Ovary (tissue), 10 donors: ENCODE measurements at regions of chr12 and their contacts with region 1.

Region 1: GRCh38 chr12:96516472-96517430 is 27.4 kb downstream of the CFAP54 start:
- DNase-seq: peak; percentile 28 to 75 (median 64)
- H3K4me3 ChIP-seq: no peak overlapping the region
- H3K27ac ChIP-seq: no peak overlapping the region
- H3K4me1 ChIP-seq: no peaks in the 10 kb centered on the region
- H3K27me3 ChIP-seq: no peaks in the 10 kb centered on the region
- CTCF ChIP-seq: peak in 2 of 3 donors; percentile 33 to 59
- EP300 ChIP-seq: no peak
- POLR2A ChIP-seq: no peak

Region 2: DNA sequence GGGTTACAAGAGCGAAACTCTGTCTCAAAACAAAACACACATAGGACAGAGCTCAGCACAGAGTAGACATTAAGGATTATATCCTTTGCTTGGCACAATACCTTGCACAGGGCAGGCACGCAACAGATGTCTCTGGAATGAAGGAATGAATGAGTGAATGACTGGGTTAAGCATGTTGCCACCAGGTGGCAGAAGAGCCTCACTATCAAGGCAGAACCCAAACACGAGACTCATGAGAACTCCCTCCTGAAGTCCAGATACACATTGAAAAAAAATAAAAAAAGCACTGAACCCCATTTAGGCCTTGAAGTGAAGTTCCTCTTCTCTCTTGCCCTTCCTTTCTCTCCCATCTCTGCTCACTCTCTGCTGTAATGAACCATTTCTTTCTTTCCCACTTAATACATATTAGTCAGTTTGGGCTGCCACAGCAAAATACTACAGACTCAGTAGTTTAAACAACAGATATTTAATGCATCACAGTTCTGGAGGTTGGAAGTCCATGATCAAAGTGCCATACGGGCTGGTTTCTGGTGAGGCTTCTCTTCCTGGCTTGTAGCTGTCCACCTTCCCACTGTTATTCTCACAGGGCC is 454.8 kb before region 1 on chr12:
- intact Hi-C with region 1: loop called in 2 of 4 experiments (anchors 5 kb)
- DNase-seq: peak; percentile 41 to 74 (median 67)
- H3K4me3 ChIP-seq: no peak overlapping the region
- H3K27ac ChIP-seq: no peak overlapping the region
- H3K4me1 ChIP-seq: no peaks in the 10 kb centered on the region
- H3K27me3 ChIP-seq: no peaks in the 10 kb centered on the region
- CTCF ChIP-seq: peak; percentile 34 to 70 (median 60)
- EP300 ChIP-seq: no peak
- POLR2A ChIP-seq: no peak

Region 3: GRCh38 chr12:96194971-96195844 is 321.5 kb before region 1 on chr12:
- intact Hi-C with region 1: loop called in 2 of 4 experiments (anchors 10 kb)
- DNase-seq: peak; percentile 27 to 56 (median 47)
- H3K4me3 ChIP-seq: peak overlapping the region; percentile 91
- H3K27ac ChIP-seq: no peak overlapping the region
- H3K4me1 ChIP-seq: peaks cover 4% of the 10 kb centered on the region
- H3K27me3 ChIP-seq: no peaks in the 10 kb centered on the region
- CTCF ChIP-seq: no peak
- EP300 ChIP-seq: no peak
- POLR2A ChIP-seq: no peak

Region 4: GRCh38 chr12:96208801-96209549 is 307.8 kb before region 1 on chr12:
- intact Hi-C with region 1: loop called in 2 of 4 experiments (anchors 10 kb)
- DNase-seq: no peak
- H3K4me3 ChIP-seq: no peak overlapping the region
- H3K27ac ChIP-seq: no peak overlapping the region
- H3K4me1 ChIP-seq: peaks cover 1% of the 10 kb centered on the region
- H3K27me3 ChIP-seq: no peaks in the 10 kb centered on the region
- CTCF ChIP-seq: no peak
- EP300 ChIP-seq: no peak
- POLR2A ChIP-seq: no peak

Region 5: DNA sequence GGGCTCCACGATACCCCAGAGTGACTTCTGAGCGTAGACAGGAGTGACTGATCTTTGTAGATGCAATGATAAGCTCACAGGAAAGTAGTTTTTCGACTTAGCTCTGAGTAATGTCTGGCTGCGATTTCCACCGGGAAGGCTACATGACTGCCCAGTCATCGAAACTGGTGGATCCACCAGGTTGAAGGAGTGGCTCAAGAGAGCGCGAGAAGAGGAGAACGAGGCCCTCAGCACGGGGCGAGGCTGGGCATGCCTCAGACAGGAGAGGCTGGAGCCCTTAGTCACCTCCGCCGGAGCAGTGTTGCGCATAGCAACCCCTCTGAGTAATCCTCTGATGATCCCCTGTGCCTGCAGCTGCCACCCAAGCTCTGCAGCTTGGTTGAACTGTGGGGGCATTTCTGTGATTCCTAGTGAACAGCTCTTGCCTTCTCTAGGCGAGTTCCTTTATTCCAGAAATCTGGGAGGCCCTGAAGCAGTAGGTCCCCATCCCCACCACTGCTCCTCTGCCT is 297.0 kb before region 1 on chr12:
- intact Hi-C with region 1: loop called in 1 of 4 experiments (anchors 10 kb)
- DNase-seq: no peak
- H3K4me3 ChIP-seq: no peak overlapping the region
- H3K27ac ChIP-seq: no peak overlapping the region
- H3K4me1 ChIP-seq: no peaks in the 10 kb centered on the region
- H3K27me3 ChIP-seq: no peaks in the 10 kb centered on the region
- CTCF ChIP-seq: no peak
- EP300 ChIP-seq: no peak
- POLR2A ChIP-seq: no peak

Region 6: DNA sequence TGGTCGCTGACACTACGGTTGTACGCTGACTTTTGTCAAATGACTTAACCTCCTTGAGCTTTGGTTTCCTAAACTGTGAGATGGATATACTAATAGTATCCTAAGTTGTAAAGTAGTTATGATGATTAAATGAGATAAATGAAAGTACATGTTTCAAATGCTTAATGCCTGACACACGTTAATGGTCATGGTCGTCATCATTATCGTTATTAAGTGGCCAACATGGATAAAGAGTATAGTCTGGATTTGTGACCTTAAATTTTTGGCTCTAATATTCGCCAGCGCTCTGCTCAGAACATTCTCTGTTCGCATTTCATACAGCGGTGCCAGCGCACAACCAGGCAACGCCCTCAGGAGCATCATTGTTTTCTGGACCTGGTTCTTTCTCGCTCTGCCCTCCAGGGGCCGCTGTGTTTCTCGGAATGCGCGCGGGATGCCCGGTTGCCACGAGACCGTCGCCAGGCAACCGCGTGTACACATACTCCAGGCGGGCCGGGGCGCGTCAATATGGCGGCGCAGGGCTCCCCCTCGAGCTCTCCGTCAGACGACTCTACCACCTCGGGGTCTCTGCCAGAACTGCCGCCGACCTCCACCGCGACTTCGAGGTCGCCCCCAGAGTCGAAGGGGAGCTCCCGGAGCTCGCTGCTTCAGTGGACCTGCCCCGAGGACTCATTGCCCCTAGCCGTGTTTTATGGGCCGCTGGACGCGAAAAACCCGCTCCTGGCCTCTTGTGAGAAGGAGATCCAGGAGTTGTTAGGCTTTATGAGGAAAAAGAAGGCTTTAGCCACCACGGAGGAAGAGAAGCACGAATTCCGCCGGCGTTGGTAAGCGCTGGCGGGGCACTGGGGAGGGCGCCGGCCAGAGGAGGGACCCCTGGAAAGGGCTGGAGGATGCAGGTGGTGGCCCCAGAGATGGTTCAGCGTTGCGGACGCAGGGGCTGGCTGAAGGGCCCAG is 27.4 kb before region 1 on chr12 and contains the start of gene CFAP54:
- intact Hi-C with region 1: no loop called
- DNase-seq: peak; percentile 87 to 96 (median 94)
- H3K4me3 ChIP-seq: peak within 1 kb of the TSS; percentile 54
- H3K27ac ChIP-seq: peak within 1 kb of the TSS in 1 of 2 donors; percentile 0
- H3K4me1 ChIP-seq: peaks cover 2% of the 10 kb centered on the region
- H3K27me3 ChIP-seq: no peaks in the 10 kb centered on the region
- CTCF ChIP-seq: peak; percentile 80 to 87 (median 87)
- EP300 ChIP-seq: peak; percentile 84
- POLR2A ChIP-seq: peak; percentile 38
- total RNA-seq, gene CFAP54: 0.58 to 29.8 (median 2.1) TPM

Region 7: GRCh38 chr12:96861656-96862055 is 344.9 kb after region 1 on chr12:
- intact Hi-C with region 1: no loop called
- DNase-seq: no peak
- H3K4me3 ChIP-seq: no peak overlapping the region
- H3K27ac ChIP-seq: no peak overlapping the region
- H3K4me1 ChIP-seq: no peaks in the 10 kb centered on the region
- H3K27me3 ChIP-seq: no peaks in the 10 kb centered on the region
- CTCF ChIP-seq: no peak
- EP300 ChIP-seq: no peak
- POLR2A ChIP-seq: no peak